SK-N-SH (cell line): ENCODE measurements at regions of chr5 and their contacts with region 1.

Region 1: GRCh38 chr5:142699184-142699720 is 13.4 kb upstream of the FGF1 start:
- DNase-seq: peak; percentile 74
- H3K4me3 ChIP-seq: no peak overlapping the region; a peak in 1 of 4 replicates
- H3K27ac ChIP-seq: no peak overlapping the region
- H3K4me1 ChIP-seq: peaks cover 23 to 28% of the 10 kb centered on the region in 2 experiments
- H3K27me3 ChIP-seq: no peaks in the 10 kb centered on the region
- CTCF ChIP-seq: peak; percentile 95
- EP300 ChIP-seq: no peak
- RAD21 ChIP-seq: peak; percentile 100

Region 2: GRCh38 chr5:142587354-142587965 is 111.8 kb before region 1 on chr5:
- CTCF ChIA-PET with region 1: interaction called, 25 read pairs
- POLR2A ChIA-PET with region 1: no interaction called
- DNase-seq: no peak
- H3K4me3 ChIP-seq: no peak overlapping the region
- H3K27ac ChIP-seq: no peak overlapping the region
- H3K4me1 ChIP-seq: peaks cover 2 to 6% of the 10 kb centered on the region in 2 experiments; a peak in 2 of 4 replicates
- H3K27me3 ChIP-seq: no peaks in the 10 kb centered on the region
- CTCF ChIP-seq: peak; percentile 61
- EP300 ChIP-seq: no peak
- RAD21 ChIP-seq: peak; percentile 50

Region 3: DNA sequence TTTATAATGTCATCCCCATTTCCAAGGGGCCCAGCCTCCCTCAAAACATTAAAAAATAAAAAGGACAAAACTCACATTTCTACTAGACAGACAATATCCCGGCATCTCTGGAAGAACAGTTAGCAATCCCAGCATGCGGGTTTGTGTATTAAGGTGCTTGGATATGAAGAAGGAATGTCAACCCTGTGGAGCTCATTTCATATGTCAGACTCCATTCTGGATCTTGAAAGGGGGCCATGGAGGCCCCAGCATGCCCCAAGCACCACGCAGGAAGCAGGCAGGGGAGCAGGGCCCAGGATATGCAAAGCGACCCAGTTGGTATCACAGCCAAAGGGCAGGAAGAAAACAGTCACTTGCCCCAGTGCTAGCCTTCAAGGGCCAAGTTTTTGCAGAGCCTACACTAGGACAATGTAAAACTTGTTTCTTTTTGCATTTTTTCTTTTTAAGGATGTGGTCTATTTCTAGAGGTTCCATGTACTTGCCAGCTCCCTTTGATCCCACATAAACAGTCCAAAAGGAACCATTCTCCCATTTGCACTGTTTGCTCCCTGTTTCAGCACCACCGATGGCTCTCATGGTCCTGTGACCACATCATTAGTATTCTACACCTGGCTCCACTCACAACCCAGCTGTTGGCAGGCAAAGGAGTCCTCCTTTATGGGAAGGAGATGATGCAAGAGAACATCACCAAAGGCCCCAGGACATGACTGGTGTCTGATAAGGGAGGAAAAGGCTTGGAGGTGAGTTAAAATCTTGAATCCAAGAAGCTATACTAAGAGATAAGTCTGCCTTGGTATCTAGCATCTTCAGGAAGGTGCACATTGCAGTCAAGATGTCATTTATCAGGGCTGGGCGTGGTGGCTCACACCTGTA is 71.6 kb before region 1 on chr5:
- CTCF ChIA-PET with region 1: interaction called, 54 read pairs
- POLR2A ChIA-PET with region 1: no interaction called
- DNase-seq: no peak
- H3K4me3 ChIP-seq: no peak overlapping the region
- H3K27ac ChIP-seq: no peak overlapping the region
- H3K4me1 ChIP-seq: peaks cover 21 to 26% of the 10 kb centered on the region in 2 experiments
- H3K27me3 ChIP-seq: no peaks in the 10 kb centered on the region
- CTCF ChIP-seq: no peak
- EP300 ChIP-seq: no peak
- RAD21 ChIP-seq: no peak

Region 4: DNA sequence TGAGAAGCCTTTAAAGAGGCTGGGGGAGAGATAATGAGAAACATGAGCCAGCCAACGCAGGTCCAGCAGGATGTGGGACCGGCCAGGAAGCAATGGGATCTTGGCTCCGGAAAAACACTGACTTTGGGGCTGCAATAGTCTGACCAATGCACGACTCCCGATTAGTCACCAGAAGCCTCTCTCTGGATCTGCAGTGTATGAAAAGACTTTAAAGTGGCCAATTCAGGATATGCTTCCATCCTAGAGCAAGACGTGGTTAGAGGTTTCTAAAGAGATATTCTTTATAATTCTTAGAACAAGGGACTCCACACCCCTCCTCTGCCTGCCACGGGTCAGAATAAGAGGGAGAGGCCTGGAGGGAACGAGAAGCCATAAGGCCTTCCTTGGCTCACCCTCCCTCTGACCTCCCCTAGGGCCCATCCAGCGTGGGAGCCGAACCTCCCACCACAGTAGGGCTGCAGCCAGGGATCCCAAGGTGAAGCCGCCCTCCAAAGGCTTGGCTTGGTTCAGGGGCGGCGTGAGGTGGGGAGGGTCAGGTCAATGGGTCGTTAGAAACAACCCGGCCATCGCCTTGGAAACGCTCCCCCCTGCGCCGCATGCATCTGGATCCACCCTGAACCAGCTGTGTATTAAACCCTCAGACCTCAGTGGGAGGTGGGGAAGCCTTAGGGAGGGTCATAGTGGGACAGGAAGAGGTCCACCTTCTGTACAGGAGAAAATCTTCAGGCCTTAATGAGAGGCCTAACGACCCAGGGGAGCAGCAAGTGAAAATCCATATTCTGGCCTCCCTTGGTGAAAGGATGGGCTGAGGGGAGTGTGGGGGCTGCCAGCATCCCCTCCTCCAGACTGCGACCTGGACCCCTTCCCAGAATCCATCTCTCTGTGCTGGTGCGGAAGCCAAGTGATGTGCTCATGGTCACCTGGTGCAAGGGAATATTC is 24.5 kb before region 1 on chr5:
- CTCF ChIA-PET with region 1: interaction called, 60 read pairs
- POLR2A ChIA-PET with region 1: no interaction called
- DNase-seq: no peak
- H3K4me3 ChIP-seq: no peak overlapping the region
- H3K27ac ChIP-seq: peak overlapping the region in 1 of 2 experiments; percentile 80; a peak in 2 of 4 replicates
- H3K4me1 ChIP-seq: peaks cover 0 to 19% of the 10 kb centered on the region in 2 experiments; a peak in 2 of 4 replicates
- H3K27me3 ChIP-seq: no peaks in the 10 kb centered on the region
- CTCF ChIP-seq: no peak
- EP300 ChIP-seq: no peak
- RAD21 ChIP-seq: no peak

Region 5: GRCh38 chr5:142785211-142785610 is 86.0 kb after region 1 on chr5:
- CTCF ChIA-PET with region 1: no interaction called
- POLR2A ChIA-PET with region 1: no interaction called
- DNase-seq: no peak
- H3K4me3 ChIP-seq: no peak overlapping the region
- H3K27ac ChIP-seq: peak overlapping the region in 1 of 2 experiments; percentile 17; a peak in 1 of 4 replicates
- H3K4me1 ChIP-seq: peaks cover 20 to 44% of the 10 kb centered on the region in 2 experiments; a peak in 3 of 4 replicates
- H3K27me3 ChIP-seq: no peaks in the 10 kb centered on the region
- CTCF ChIP-seq: no peak
- EP300 ChIP-seq: no peak
- RAD21 ChIP-seq: no peak

Region 6: GRCh38 chr5:142800776-142801494 is 101.7 kb after region 1 on chr5:
- CTCF ChIA-PET with region 1: no interaction called
- POLR2A ChIA-PET with region 1: no interaction called
- DNase-seq: no peak
- H3K4me3 ChIP-seq: no peak overlapping the region
- H3K27ac ChIP-seq: no peak overlapping the region
- H3K4me1 ChIP-seq: peaks cover 0 to 18% of the 10 kb centered on the region in 2 experiments; a peak in 1 of 4 replicates
- H3K27me3 ChIP-seq: no peaks in the 10 kb centered on the region
- CTCF ChIP-seq: no peak
- EP300 ChIP-seq: no peak
- RAD21 ChIP-seq: no peak